RWPE1 (cell line): ENCODE measurements at regions of chr15 and their contacts with region 1.

Region 1: GRCh38 chr15:70875001-70875782 is 17.0 kb downstream of the THAP10 start:
- DNase-seq: no peak
- H3K27ac ChIP-seq: no peak overlapping the region
- CTCF ChIP-seq: peak; percentile 81

Region 2: GRCh38 chr15:70234256-70234905 is 640.8 kb before region 1 on chr15:
- CTCF ChIA-PET with region 1: no interaction called
- POLR2A ChIA-PET with region 1: no interaction called
- DNase-seq: no peak
- H3K27ac ChIP-seq: no peak overlapping the region
- CTCF ChIP-seq: no peak

Region 3: DNA sequence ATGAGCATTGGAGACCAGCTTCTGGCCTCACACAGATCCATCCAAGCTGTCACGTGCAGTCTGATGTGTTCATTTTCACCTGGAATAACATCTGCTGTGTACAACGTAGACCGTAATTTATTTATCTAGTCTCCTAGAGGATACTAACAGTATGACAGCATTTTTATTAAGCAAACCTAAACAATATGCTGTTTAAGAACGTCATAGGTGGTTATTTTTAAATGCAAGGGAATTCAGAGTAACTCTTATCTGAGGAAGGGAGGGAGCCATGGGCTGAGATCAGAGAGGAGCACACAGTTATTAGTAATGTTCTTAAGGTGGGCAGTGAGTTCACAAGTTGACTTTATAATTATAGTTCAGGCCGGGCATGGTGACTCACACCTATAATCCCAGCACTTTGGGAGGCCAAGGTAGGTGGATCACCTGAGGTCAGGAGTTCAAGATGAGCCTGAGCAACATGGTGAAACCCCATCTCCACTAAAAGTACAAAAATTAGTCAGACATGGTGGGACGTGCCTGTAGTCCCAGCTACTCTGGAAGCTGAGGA is 305.4 kb before region 1 on chr15:
- CTCF ChIA-PET with region 1: no interaction called
- POLR2A ChIA-PET with region 1: no interaction called
- DNase-seq: peak; percentile 74
- H3K27ac ChIP-seq: no peak overlapping the region
- CTCF ChIP-seq: no peak

Region 4: DNA sequence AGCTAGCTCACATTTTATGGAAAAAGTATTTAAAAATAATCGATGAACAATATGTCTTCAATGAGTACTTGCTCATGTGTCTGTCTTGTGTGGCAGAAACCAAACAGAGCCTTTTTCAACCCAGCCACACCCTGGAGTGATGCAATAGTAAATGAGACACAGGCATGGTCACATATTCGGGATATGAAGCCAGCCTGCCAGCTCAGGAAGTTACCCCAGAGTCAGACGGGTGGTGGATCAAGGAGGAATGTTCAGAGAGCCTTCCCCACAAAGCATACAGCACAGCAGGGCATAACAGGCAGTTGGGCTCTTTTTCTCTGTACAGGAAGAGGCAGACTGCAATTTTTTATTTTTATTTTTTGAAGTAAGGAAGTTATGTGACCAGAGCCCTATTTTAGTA is 48.6 kb before region 1 on chr15:
- CTCF ChIA-PET with region 1: interaction called, 25 read pairs
- POLR2A ChIA-PET with region 1: no interaction called
- DNase-seq: peak; percentile 70
- H3K27ac ChIP-seq: peak overlapping the region; percentile 72
- CTCF ChIP-seq: no peak